Sciatic nerve (tissue), 2 donors: ENCODE measurements at regions of chr11 and their contacts with region 1.

Region 1: DNA sequence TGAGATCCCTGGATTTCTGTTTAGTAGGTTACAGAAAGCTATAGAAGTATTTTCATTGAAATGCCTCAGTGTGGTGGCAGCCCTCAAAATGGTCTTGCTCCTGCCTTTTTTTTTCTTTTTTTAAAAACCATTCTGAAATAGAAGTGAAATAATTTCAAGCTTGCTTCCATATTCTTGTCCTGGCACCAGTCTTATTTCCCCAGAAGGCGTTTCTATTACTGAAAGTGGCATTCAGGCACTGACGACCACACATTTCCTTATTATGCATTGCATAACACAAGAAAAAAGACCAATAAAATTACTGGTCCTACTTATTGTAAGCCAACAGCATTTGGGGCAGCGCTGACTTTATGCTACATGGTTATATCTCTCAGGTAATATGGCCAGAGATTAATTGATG is 24.5 kb upstream of the LRRC4C start:
- DNase-seq: no peak
- ATAC-seq: no peak

Region 2: GRCh38 chr11:42482822-42483221 is 998.9 kb after region 1 on chr11:
- intact Hi-C with region 1: no loop called
- DNase-seq: no peak
- ATAC-seq: no peak

Region 3: DNA sequence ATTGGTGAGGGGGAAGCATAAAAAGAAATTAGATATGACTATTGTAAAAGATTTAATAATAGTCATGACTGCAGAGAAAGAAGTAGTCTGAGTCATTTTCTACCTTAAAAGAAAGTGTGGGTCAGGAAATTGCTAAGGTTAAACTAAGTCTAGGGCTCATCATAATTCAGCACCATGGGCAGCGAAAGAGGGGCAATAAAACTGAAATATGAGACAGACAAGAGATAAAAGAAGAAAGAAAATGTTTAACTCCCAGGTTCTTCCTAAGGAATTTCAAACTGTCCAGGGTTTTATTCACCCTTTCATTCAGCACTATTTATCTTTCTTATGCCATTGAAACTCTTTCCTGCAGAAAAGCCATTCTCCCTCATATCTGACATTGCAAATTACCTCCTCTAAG is 1713.4 kb after region 1 on chr11:
- intact Hi-C with region 1: loop called (anchors 5 kb)
- DNase-seq: no peak
- ATAC-seq: no peak